Naive thymus-derived CD4-positive, alpha-beta T cell (primary cell): ENCODE measurements at regions of chr11 and their contacts with region 1.

Region 1: GRCh38 chr11:111049131-111049530 is 196.4 kb upstream of the POU2AF2 start:
- DNase-seq: no peak
- ATAC-seq: no peak
- H3K4me3 ChIP-seq: no peak overlapping the region
- H3K4me3 Mint-ChIP-seq: no peak overlapping the region
- H3K27ac ChIP-seq: no peak overlapping the region
- H3K27ac Mint-ChIP-seq: no peak overlapping the region
- H3K4me1 ChIP-seq: no peaks in the 10 kb centered on the region
- H3K4me1 Mint-ChIP-seq: peaks cover 0 to 2% (median 0%) of the 10 kb centered on the region in 7 donors
- H3K27me3 ChIP-seq: peaks cover 0 to 3% of the 10 kb centered on the region in 2 donors
- H3K27me3 Mint-ChIP-seq: peaks cover 0 to 7% (median 6%) of the 10 kb centered on the region in 5 donors

Region 2: GRCh38 chr11:111001986-111002611 is 47.0 kb before region 1 on chr11:
- CTCF ChIA-PET with region 1: no interaction called
- POLR2A ChIA-PET with region 1: no interaction called
- intact Hi-C with region 1: loop called in 1 of 2 experiments (anchors 1 kb)
- DNase-seq: no peak
- ATAC-seq: no peak
- H3K4me3 ChIP-seq: no peak overlapping the region
- H3K4me3 Mint-ChIP-seq: no peak overlapping the region
- H3K27ac ChIP-seq: no peak overlapping the region
- H3K27ac Mint-ChIP-seq: no peak overlapping the region
- H3K4me1 ChIP-seq: no peaks in the 10 kb centered on the region
- H3K4me1 Mint-ChIP-seq: no peaks in the 10 kb centered on the region
- H3K27me3 ChIP-seq: no peaks in the 10 kb centered on the region
- H3K27me3 Mint-ChIP-seq: peaks cover 0 to 7% (median 0%) of the 10 kb centered on the region in 5 donors

Region 3: DNA sequence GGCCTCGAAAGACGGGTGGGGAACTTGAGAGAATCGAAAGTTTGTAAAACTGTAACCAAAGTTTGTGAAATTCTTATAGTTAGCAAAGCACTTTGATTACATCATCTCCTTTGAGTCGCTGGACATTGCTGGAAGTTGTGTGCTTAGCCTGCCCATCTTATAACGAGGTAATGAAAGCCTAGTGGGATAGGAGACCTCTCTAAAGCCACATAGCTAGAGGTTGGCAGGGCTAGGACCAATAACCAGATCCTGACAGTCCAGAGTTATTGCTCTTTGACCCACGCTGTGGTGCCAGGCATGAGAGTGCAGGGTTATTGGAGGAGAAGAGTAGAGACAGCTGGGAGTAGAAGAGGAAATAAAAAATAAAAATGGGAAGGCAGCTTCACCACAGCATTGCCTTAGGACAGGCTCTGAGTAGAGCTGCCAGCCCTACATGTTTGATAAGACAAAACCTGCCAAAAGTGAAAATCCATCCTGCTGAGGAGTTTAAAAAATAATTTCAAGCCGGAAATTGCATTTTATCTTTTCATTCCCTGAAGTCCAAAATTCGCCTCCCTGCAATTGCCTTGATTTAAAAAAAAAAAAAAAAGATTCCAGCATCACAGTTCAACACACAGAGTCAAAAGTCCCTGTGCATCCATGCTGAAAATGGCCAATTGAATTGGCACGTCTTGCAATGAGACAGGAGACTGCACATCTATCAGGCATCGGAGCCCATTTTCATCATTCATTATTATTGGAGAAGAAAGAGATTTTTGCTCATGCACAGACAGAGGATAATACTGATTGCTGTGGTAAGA is 29.1 kb before region 1 on chr11:
- CTCF ChIA-PET with region 1: no interaction called
- POLR2A ChIA-PET with region 1: no interaction called
- intact Hi-C with region 1: no loop called
- DNase-seq: no peak
- ATAC-seq: peak; percentile 54
- H3K4me3 ChIP-seq: no peak overlapping the region
- H3K4me3 Mint-ChIP-seq: no peak overlapping the region
- H3K27ac ChIP-seq: no peak overlapping the region
- H3K27ac Mint-ChIP-seq: no peak overlapping the region
- H3K4me1 ChIP-seq: no peaks in the 10 kb centered on the region
- H3K4me1 Mint-ChIP-seq: peaks cover 0 to 6% (median 0%) of the 10 kb centered on the region in 7 donors
- H3K27me3 ChIP-seq: no peaks in the 10 kb centered on the region
- H3K27me3 Mint-ChIP-seq: peaks cover 2 to 28% (median 10%) of the 10 kb centered on the region in 5 donors